A673 (cell line): ENCODE measurements at regions of chr5 and their contacts with region 1.

Region 1: GRCh38 chr5:38441453-38442246 is 114.8 kb downstream of the LIFR start:
- DNase-seq: peak; percentile 96
- H3K4me3 ChIP-seq: no peak overlapping the region
- H3K27ac ChIP-seq: no peak overlapping the region
- H3K4me1 ChIP-seq: peaks cover 11% of the 10 kb centered on the region
- H3K27me3 ChIP-seq: no peaks in the 10 kb centered on the region
- CTCF ChIP-seq: peak; percentile 97

Region 2: DNA sequence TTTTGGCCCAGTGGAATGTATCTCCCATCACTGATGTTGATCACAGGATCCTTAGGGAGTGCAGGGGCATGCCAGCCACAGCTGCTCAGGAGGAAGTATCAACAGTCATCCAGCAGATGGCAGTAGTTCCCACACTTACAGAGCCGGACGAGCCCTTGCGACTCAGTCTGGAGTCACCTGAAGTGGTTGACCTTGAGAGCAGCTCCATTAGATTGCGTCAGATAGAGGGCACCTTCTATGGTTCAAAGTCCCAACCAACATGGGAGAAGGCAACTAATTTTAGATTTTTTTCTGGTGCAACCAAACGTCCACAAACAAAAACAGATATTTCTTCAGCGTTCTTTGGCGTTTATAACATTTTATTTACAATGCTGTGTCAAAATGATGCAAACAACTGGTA is 58.8 kb before region 1 on chr5:
- CTCF ChIA-PET with region 1: interaction called, 10 read pairs
- POLR2A ChIA-PET with region 1: no interaction called
- intact Hi-C with region 1: loop called (anchors 5 kb)
- DNase-seq: peak; percentile 81
- H3K4me3 ChIP-seq: no peak overlapping the region
- H3K27ac ChIP-seq: no peak overlapping the region
- H3K4me1 ChIP-seq: peaks cover 36% of the 10 kb centered on the region
- H3K27me3 ChIP-seq: no peaks in the 10 kb centered on the region
- CTCF ChIP-seq: peak; percentile 92

Region 3: GRCh38 chr5:38551030-38552017 is 109.7 kb after region 1 on chr5:
- CTCF ChIA-PET with region 1: interaction called, 13 read pairs
- POLR2A ChIA-PET with region 1: no interaction called
- intact Hi-C with region 1: loop called (anchors 1 kb)
- DNase-seq: peak; percentile 73
- H3K4me3 ChIP-seq: no peak overlapping the region
- H3K27ac ChIP-seq: no peak overlapping the region
- H3K4me1 ChIP-seq: peaks cover 21% of the 10 kb centered on the region
- H3K27me3 ChIP-seq: no peaks in the 10 kb centered on the region
- CTCF ChIP-seq: peak; percentile 76

Region 4: GRCh38 chr5:38719916-38720315 is 278.3 kb after region 1 on chr5:
- CTCF ChIA-PET with region 1: interaction called, 9 read pairs
- POLR2A ChIA-PET with region 1: no interaction called
- intact Hi-C with region 1: loop called (anchors 5 kb)
- DNase-seq: peak; percentile 90
- H3K4me3 ChIP-seq: peak overlapping the region; percentile 11
- H3K27ac ChIP-seq: peak overlapping the region; percentile 90
- H3K4me1 ChIP-seq: peaks cover 87% of the 10 kb centered on the region
- H3K27me3 ChIP-seq: no peaks in the 10 kb centered on the region
- CTCF ChIP-seq: no peak

Region 5: DNA sequence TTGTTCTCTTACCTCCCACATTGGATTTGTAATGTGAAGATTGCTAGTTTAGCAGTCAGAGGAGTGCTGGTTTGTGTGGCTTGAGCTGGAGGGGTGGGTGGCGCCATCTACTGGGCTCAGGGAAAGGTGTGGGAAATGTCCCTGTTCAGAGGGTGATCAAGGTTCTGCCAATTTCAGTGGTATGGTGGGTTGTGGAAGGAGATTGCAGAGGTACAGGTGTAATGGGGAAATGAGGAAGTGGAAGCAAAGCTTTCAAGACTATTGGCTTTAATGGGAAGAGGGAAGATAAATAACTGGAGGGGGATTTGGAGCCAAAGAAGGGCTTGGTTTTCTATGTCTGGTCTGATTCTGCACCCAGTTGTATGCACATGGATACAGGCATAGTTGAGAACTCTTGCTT is 480.5 kb after region 1 on chr5:
- CTCF ChIA-PET with region 1: interaction called, 15 read pairs
- POLR2A ChIA-PET with region 1: no interaction called
- intact Hi-C with region 1: loop called (anchors 2 kb)
- DNase-seq: peak; percentile 72
- H3K4me3 ChIP-seq: no peak overlapping the region
- H3K27ac ChIP-seq: no peak overlapping the region
- H3K4me1 ChIP-seq: no peaks in the 10 kb centered on the region
- H3K27me3 ChIP-seq: no peaks in the 10 kb centered on the region
- CTCF ChIP-seq: peak; percentile 96